HAP-1 (cell line): ENCODE measurements at regions of chr6 and their contacts with region 1.

Region 1: DNA sequence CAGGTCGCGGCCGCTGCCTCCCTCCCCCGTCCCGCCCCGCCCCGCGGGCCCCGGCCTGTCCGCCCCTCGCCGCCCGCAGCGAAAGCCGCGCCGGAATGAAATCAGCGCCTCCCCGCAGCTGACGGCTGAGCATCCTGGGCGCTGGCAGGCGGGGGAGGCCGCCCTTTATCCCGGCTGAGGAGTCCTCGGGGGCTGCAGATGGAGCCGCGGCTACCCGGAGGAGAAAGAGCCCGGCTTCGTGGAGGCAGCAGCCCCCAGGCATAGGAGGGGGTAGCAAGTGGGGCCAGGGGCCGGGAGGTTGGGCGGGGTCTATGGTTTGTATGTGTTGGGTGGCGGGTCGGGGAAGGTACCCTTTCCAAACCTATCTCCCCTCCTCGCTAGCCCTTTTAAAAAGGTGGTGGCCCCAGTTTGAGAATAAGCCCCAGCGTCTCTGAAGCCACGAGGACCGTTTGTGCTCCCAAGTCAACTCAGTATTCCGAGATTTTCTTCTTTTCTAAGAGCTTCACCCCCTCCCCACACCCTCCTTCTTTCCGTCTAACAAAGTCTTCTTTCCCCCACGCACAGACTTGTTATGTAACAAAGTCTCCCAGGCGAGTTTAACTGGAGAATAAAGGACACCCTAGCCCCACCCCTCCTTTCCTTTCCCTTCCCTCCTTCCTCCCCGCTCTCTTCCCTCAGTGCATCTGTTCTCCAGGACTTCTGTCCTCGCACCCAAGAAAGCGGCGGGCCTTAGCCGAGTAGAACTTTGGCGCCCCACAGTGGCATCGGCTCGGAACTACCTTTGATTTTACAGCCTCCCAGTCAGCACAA is 11.0 kb downstream of the POU3F2 start:
- DNase-seq: peak; percentile 90 to 92
- H3K4me3 ChIP-seq: peak overlapping the region; percentile 39
- H3K4me1 ChIP-seq: peaks cover 6% of the 10 kb centered on the region; the same call in 1 of the 2 replicates
- H3K27me3 ChIP-seq: no peaks in the 10 kb centered on the region

Region 2: GRCh38 chr6:98039869-98040607 is 805.4 kb before region 1 on chr6:
- in situ Hi-C with region 1: loop called (anchors 25 kb)
- DNase-seq: peak in 1 of 2 experiments; percentile 45
- H3K4me3 ChIP-seq: no peak overlapping the region
- H3K4me1 ChIP-seq: peaks cover 34% of the 10 kb centered on the region
- H3K27me3 ChIP-seq: no peaks in the 10 kb centered on the region

Region 3: GRCh38 chr6:98463038-98464000 is 382.1 kb before region 1 on chr6:
- in situ Hi-C with region 1: loop called (anchors 25 kb)
- DNase-seq: no peak
- H3K4me3 ChIP-seq: no peak overlapping the region
- H3K4me1 ChIP-seq: no peaks in the 10 kb centered on the region
- H3K27me3 ChIP-seq: peaks cover 12% of the 10 kb centered on the region; the same call in 1 of the 2 replicates

Region 4: GRCh38 chr6:98641949-98642348 is 203.5 kb before region 1 on chr6:
- in situ Hi-C with region 1: loop called (anchors 25 kb)
- DNase-seq: no peak
- H3K4me3 ChIP-seq: no peak overlapping the region
- H3K4me1 ChIP-seq: peaks cover 61% of the 10 kb centered on the region
- H3K27me3 ChIP-seq: no peaks in the 10 kb centered on the region

Region 5: GRCh38 chr6:99151634-99152344 is 306.4 kb after region 1 on chr6:
- in situ Hi-C with region 1: no loop called
- DNase-seq: peak; percentile 33 to 81
- H3K4me3 ChIP-seq: no peak overlapping the region
- H3K4me1 ChIP-seq: no peaks in the 10 kb centered on the region
- H3K27me3 ChIP-seq: no peaks in the 10 kb centered on the region; the same call in 1 of the 2 replicates

Region 6: GRCh38 chr6:99550046-99550748 is 704.8 kb after region 1 on chr6:
- in situ Hi-C with region 1: no loop called
- DNase-seq: no peak
- H3K4me3 ChIP-seq: no peak overlapping the region
- H3K4me1 ChIP-seq: no peaks in the 10 kb centered on the region
- H3K27me3 ChIP-seq: no peaks in the 10 kb centered on the region